Activated CD4-positive, alpha-beta T cell treated with anti-CD3 and anti-CD28 coated beads for 36 hours (primary cell): ENCODE measurements at regions of chr6 and their contacts with region 1.

Region 1: GRCh38 chr6:90393232-90393884 is 96.7 kb upstream of the BACH2 start:
- DNase-seq: peak; percentile 87
- ATAC-seq: peak; percentile 41
- H3K4me3 Mint-ChIP-seq: no peak overlapping the region
- H3K27ac Mint-ChIP-seq: peak overlapping the region; percentile 65
- H3K4me1 Mint-ChIP-seq: peaks cover 76% of the 10 kb centered on the region
- H3K27me3 Mint-ChIP-seq: no peaks in the 10 kb centered on the region

Region 2: GRCh38 chr6:90251295-90251992 is 141.9 kb before region 1 on chr6:
- CTCF ChIA-PET with region 1: interaction called, 4 read pairs
- POLR2A ChIA-PET with region 1: interaction called, 4 read pairs
- intact Hi-C with region 1: loop called in 1 of 2 experiments (anchors 1 kb)
- DNase-seq: no peak
- ATAC-seq: peak; percentile 72
- H3K4me3 Mint-ChIP-seq: peak overlapping the region; percentile 26
- H3K27ac Mint-ChIP-seq: peak overlapping the region; percentile 97
- H3K4me1 Mint-ChIP-seq: peaks cover 89% of the 10 kb centered on the region
- H3K27me3 Mint-ChIP-seq: no peaks in the 10 kb centered on the region

Region 3: GRCh38 chr6:90319044-90319443 is 74.3 kb before region 1 on chr6:
- CTCF ChIA-PET with region 1: interaction called, 5 read pairs
- POLR2A ChIA-PET with region 1: interaction called, 7 read pairs
- intact Hi-C with region 1: loop called (anchors 1 to 2 kb)
- DNase-seq: peak; percentile 40
- ATAC-seq: peak; percentile 82
- H3K4me3 Mint-ChIP-seq: no peak overlapping the region
- H3K27ac Mint-ChIP-seq: peak overlapping the region; percentile 80
- H3K4me1 Mint-ChIP-seq: peaks cover 43% of the 10 kb centered on the region
- H3K27me3 Mint-ChIP-seq: peaks cover 6% of the 10 kb centered on the region

Region 4: DNA sequence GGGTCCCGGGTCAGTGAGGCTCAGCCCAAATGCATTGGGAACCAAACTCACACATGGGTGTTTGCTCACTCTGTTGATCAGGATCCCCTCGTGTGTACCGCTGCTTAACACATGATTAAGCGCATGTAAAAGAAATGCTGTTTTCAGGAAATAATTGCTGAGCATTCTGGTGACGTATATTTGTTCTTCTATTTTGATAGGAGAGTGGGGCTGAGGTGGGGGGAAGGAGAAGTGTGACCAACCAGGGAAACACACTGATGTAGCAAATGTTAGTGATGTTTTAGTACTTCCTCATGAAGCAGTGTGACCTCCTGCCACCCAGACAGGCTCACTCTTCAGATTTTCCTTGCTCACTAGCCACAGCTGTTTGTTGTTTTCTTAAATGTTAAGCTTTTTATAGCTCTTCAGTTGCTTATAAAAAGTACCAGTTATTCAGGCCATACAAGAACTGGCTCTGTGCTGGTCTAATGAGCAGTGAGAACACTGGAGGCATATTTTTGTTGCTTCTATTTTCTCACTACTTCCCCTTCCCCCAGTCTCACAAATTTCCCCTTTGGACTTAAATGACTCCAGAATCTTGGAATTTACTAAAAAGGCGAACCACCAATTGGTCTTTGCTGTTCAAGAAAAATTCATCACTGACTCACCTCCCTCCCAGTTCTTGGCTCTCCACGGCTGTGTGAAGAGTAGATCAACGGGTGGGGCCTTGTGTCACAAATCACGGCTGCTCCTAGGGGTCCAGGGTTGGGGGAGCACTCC is 17.5 kb before region 1 on chr6:
- CTCF ChIA-PET with region 1: interaction called, 20 read pairs
- POLR2A ChIA-PET with region 1: no interaction called
- intact Hi-C with region 1: no loop called
- DNase-seq: no peak
- ATAC-seq: no peak
- H3K4me3 Mint-ChIP-seq: no peak overlapping the region
- H3K27ac Mint-ChIP-seq: no peak overlapping the region
- H3K4me1 Mint-ChIP-seq: peaks cover under 1% of the 10 kb centered on the region
- H3K27me3 Mint-ChIP-seq: peaks cover 2% of the 10 kb centered on the region

Region 5: DNA sequence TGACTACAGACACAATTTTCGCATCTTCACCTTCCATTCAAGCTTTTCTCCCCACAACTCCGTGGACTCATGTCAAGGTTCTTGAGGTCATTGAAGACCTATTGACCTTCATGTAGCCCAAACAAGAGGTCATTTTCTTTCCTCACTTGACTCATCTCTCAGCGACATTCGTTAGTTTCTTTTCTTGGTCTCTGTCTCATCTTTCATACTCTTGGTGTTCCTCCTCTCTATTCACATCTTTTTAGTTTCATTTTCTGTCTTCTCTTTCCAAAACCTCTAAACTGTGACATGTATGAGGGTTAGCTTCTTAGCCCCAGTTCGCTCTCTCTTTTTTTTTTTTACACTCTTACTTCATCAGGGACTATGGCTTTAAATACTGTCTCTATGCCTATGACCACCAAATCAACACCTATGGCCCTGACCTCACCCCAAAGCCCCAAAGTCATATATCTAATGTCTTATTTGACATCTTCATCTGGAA is 31.8 kb after region 1 on chr6:
- CTCF ChIA-PET with region 1: interaction called, 23 read pairs
- POLR2A ChIA-PET with region 1: interaction called, 5 read pairs
- intact Hi-C with region 1: loop called (anchors 1 kb)
- DNase-seq: peak; percentile 34
- ATAC-seq: peak; percentile 93
- H3K4me3 Mint-ChIP-seq: peak overlapping the region; percentile 49
- H3K27ac Mint-ChIP-seq: peak overlapping the region; percentile 94
- H3K4me1 Mint-ChIP-seq: peaks cover 34% of the 10 kb centered on the region
- H3K27me3 Mint-ChIP-seq: no peaks in the 10 kb centered on the region

Region 6: GRCh38 chr6:90472744-90473143 is 79.4 kb after region 1 on chr6:
- CTCF ChIA-PET with region 1: interaction called, 37 read pairs
- POLR2A ChIA-PET with region 1: interaction called, 10 read pairs
- intact Hi-C with region 1: loop called (anchors 1 kb)
- DNase-seq: peak; percentile 51
- ATAC-seq: peak; percentile 9
- H3K4me3 Mint-ChIP-seq: peak overlapping the region; percentile 58
- H3K27ac Mint-ChIP-seq: peak overlapping the region; percentile 77
- H3K4me1 Mint-ChIP-seq: peaks cover 99% of the 10 kb centered on the region
- H3K27me3 Mint-ChIP-seq: peaks cover 2% of the 10 kb centered on the region